B cell (primary cell): ENCODE measurements at regions of chr6 and their contacts with region 1.

Region 1: GRCh38 chr6:136289579-136290409 is at the start of gene BCLAF1:
- DNase-seq: peak; percentile 100
- ATAC-seq: peak; percentile 78
- H3K4me3 ChIP-seq: peak within 1 kb of the TSS; percentile 93 to 100 (median 99)
- H3K4me3 Mint-ChIP-seq: peak within 1 kb of the TSS; percentile 98
- H3K27ac ChIP-seq: peak within 1 kb of the TSS; percentile 99 to 100
- H3K27ac Mint-ChIP-seq: peak within 1 kb of the TSS; percentile 100
- H3K4me1 ChIP-seq: peaks cover 38 to 49% of the 10 kb centered on the region in 2 donors
- H3K4me1 Mint-ChIP-seq: peaks cover 44% of the 10 kb centered on the region
- H3K27me3 ChIP-seq: no peaks in the 10 kb centered on the region
- H3K27me3 Mint-ChIP-seq: no peaks in the 10 kb centered on the region
- CTCF ChIP-seq: no peak
- total RNA-seq, gene BCLAF1: 256 and 268 TPM in 2 replicates

Region 2: DNA sequence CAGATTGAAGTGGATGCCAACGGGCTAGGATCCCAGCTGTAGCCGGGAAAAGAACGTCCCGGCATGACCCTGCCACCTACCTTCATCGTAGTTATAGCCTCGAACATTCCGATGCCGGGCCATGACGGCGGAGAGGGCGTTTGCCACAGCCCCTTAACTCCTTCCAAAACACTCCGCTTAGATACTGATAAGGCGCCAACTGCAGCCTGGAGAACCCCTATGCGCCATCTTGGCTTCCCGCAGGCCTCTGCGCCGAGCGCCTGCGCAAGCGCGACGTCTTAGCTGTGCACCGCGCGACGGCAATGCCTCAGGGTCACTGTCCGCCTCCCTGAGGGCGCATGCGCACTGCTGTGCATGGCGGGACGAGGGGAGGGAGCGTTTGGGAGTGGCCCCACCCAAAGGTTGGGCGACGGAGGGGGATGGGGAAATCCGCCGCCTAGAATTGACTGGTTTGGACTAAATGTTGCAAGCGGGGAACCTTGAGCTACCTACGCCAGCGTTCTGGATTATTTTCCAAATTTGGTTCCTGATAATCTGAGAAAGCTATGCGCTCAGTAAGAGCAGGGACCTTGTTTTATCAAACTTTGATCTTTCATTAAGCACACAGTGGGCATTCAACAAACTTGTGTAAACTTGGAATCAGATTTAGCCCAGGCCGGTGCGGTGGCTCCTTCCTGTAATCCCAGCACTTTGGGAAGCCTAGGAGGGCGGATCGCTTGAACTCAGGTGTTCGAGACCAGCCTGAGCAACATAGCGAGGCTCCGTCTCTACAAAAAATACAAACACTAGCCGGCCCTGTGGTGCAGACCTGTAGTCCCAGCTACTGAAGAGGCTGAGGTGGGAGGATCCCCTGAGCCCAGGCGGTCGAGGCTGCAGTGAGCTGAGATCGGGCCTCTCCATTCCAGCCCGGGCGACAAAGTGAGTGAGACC is 1235.0 kb before region 1 on chr6 and contains the start of gene HBS1L:
- CTCF ChIA-PET with region 1: no interaction called
- POLR2A ChIA-PET with region 1: interaction called, 3 read pairs
- intact Hi-C with region 1: loop called (anchors 10 kb)
- DNase-seq: peak; percentile 99
- ATAC-seq: peak; percentile 98
- H3K4me3 ChIP-seq: peak within 1 kb of the TSS; percentile 68 to 98 (median 91)
- H3K4me3 Mint-ChIP-seq: peak within 1 kb of the TSS; percentile 95
- H3K27ac ChIP-seq: peak within 1 kb of the TSS; percentile 80 to 95
- H3K27ac Mint-ChIP-seq: peak within 1 kb of the TSS; percentile 95
- H3K4me1 ChIP-seq: peaks cover 16 to 19% of the 10 kb centered on the region in 2 donors
- H3K4me1 Mint-ChIP-seq: peaks cover 34% of the 10 kb centered on the region
- H3K27me3 ChIP-seq: no peaks in the 10 kb centered on the region
- H3K27me3 Mint-ChIP-seq: no peaks in the 10 kb centered on the region
- CTCF ChIP-seq: no peak
- total RNA-seq, gene HBS1L: 58.2 and 58.9 TPM in 2 replicates

Region 3: GRCh38 chr6:135851442-135852271 is 438.1 kb before region 1 on chr6 and contains the start of gene PDE7B:
- CTCF ChIA-PET with region 1: no interaction called
- POLR2A ChIA-PET with region 1: no interaction called
- intact Hi-C with region 1: loop called (anchors 5 kb)
- DNase-seq: peak; percentile 86
- ATAC-seq: peak; percentile 99
- H3K4me3 ChIP-seq: peak within 1 kb of the TSS; percentile 40 to 82 (median 67)
- H3K4me3 Mint-ChIP-seq: peak within 1 kb of the TSS; percentile 87
- H3K27ac ChIP-seq: peak within 1 kb of the TSS; percentile 64 to 85
- H3K27ac Mint-ChIP-seq: peak within 1 kb of the TSS; percentile 79
- H3K4me1 ChIP-seq: peaks cover 17 to 40% of the 10 kb centered on the region in 2 donors
- H3K4me1 Mint-ChIP-seq: peaks cover 48% of the 10 kb centered on the region
- H3K27me3 ChIP-seq: no peaks in the 10 kb centered on the region
- H3K27me3 Mint-ChIP-seq: no peaks in the 10 kb centered on the region
- CTCF ChIP-seq: no peak
- total RNA-seq, gene PDE7B: 7.5 and 9.2 TPM in 2 replicates

Region 4: GRCh38 chr6:135962731-135963130 is 327.1 kb before region 1 on chr6:
- CTCF ChIA-PET with region 1: no interaction called
- POLR2A ChIA-PET with region 1: no interaction called
- intact Hi-C with region 1: no loop called
- DNase-seq: no peak
- ATAC-seq: no peak
- H3K4me3 ChIP-seq: no peak overlapping the region
- H3K4me3 Mint-ChIP-seq: no peak overlapping the region
- H3K27ac ChIP-seq: no peak overlapping the region
- H3K27ac Mint-ChIP-seq: no peak overlapping the region
- H3K4me1 ChIP-seq: no peaks in the 10 kb centered on the region
- H3K4me1 Mint-ChIP-seq: no peaks in the 10 kb centered on the region
- H3K27me3 ChIP-seq: no peaks in the 10 kb centered on the region
- H3K27me3 Mint-ChIP-seq: no peaks in the 10 kb centered on the region
- CTCF ChIP-seq: no peak

Region 5: GRCh38 chr6:136249811-136250685 is 39.7 kb before region 1 on chr6 and contains the start of gene MTFR2:
- CTCF ChIA-PET with region 1: interaction called, 18 read pairs
- POLR2A ChIA-PET with region 1: interaction called, 27 read pairs
- intact Hi-C with region 1: loop called (anchors 1 kb)
- DNase-seq: peak; percentile 97
- ATAC-seq: peak; percentile 97
- H3K4me3 ChIP-seq: peak within 1 kb of the TSS; percentile 49 to 91 (median 83)
- H3K4me3 Mint-ChIP-seq: peak within 1 kb of the TSS; percentile 93
- H3K27ac ChIP-seq: peak within 1 kb of the TSS in 1 of 2 donors; percentile 20
- H3K27ac Mint-ChIP-seq: peak within 1 kb of the TSS; percentile 81
- H3K4me1 ChIP-seq: peaks cover 15 to 16% of the 10 kb centered on the region in 2 donors
- H3K4me1 Mint-ChIP-seq: peaks cover 33% of the 10 kb centered on the region
- H3K27me3 ChIP-seq: no peaks in the 10 kb centered on the region
- H3K27me3 Mint-ChIP-seq: no peaks in the 10 kb centered on the region
- CTCF ChIP-seq: no peak
- total RNA-seq, gene MTFR2: 3.9 and 4.0 TPM in 2 replicates

Region 6: DNA sequence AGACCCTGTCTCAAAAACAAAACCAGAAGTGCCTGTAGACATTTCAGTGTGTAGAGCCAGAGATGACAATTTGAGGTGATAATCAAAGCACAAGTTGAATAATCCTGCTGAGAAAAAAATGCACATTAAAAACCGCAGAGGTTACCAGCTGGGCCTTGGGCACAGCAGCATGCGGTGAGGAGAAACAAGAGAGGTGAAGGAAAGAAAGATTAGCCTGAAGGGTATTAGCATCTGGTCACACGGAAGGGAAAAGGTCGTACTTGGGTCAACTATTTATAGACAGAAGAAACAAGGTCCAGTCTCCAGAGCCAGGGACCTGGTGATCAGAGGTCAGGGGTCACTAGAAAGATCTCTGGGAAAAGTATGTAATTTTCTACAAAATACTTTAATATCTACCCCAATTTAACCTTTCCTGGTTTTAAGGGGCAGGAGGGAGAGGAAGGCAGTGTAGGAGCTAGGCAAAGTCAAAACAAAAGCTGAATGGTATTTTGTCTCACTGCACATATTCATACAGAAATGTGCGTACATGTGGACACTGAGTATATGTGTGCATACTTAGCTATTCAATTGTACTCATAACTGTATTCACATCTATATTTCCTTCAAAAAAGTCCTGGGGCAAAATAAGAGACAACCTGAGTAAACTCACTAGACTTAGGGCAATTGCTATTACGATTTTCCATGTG is 250.3 kb after region 1 on chr6:
- CTCF ChIA-PET with region 1: no interaction called
- POLR2A ChIA-PET with region 1: no interaction called
- intact Hi-C with region 1: no loop called
- DNase-seq: no peak
- ATAC-seq: no peak
- H3K4me3 ChIP-seq: no peak overlapping the region
- H3K4me3 Mint-ChIP-seq: no peak overlapping the region
- H3K27ac ChIP-seq: no peak overlapping the region
- H3K27ac Mint-ChIP-seq: no peak overlapping the region
- H3K4me1 ChIP-seq: no peaks in the 10 kb centered on the region
- H3K4me1 Mint-ChIP-seq: no peaks in the 10 kb centered on the region
- H3K27me3 ChIP-seq: peaks cover 0 to 5% (median 1%) of the 10 kb centered on the region in 4 experiments
- H3K27me3 Mint-ChIP-seq: peaks cover 36% of the 10 kb centered on the region
- CTCF ChIP-seq: no peak

Region 7: GRCh38 chr6:136822376-136823127 is 532.8 kb after region 1 on chr6 and contains the start of gene PEX7:
- CTCF ChIA-PET with region 1: interaction called, 3 read pairs
- POLR2A ChIA-PET with region 1: interaction called, 3 read pairs
- intact Hi-C with region 1: loop called (anchors 2 kb)
- DNase-seq: peak; percentile 94
- ATAC-seq: peak; percentile 91
- H3K4me3 ChIP-seq: peak within 1 kb of the TSS; percentile 45 to 87 (median 71)
- H3K4me3 Mint-ChIP-seq: peak within 1 kb of the TSS; percentile 90
- H3K27ac ChIP-seq: peak within 1 kb of the TSS; percentile 65 to 95
- H3K27ac Mint-ChIP-seq: peak within 1 kb of the TSS; percentile 91
- H3K4me1 ChIP-seq: peaks cover 11 to 12% of the 10 kb centered on the region in 2 donors
- H3K4me1 Mint-ChIP-seq: peaks cover 18% of the 10 kb centered on the region
- H3K27me3 ChIP-seq: peaks cover 0 to 3% (median 0%) of the 10 kb centered on the region in 4 experiments
- H3K27me3 Mint-ChIP-seq: peaks cover 9% of the 10 kb centered on the region
- CTCF ChIP-seq: peak; percentile 82
- total RNA-seq, gene PEX7: 3.9 and 6.6 TPM in 2 replicates